ENCODE measurements at regions of chrX and their contacts with region 1.

Region 1: GRCh38 chrX:65706041-65706828 is 38.8 kb downstream of the MSN start:
- DNase-seq: peak; percentile 83
- H3K4me3 Mint-ChIP-seq: peak overlapping the region; percentile 52
- H3K27ac Mint-ChIP-seq: peak overlapping the region; percentile 96
- H3K4me1 Mint-ChIP-seq: peaks cover 68% of the 10 kb centered on the region
- H3K27me3 Mint-ChIP-seq: no peaks in the 10 kb centered on the region

Region 2: GRCh38 chrX:65273152-65273551 is 433.1 kb before region 1 on chrX:
- CTCF ChIA-PET with region 1: no interaction called
- intact Hi-C with region 1: no loop called
- DNase-seq: no peak
- H3K4me3 Mint-ChIP-seq: no peak overlapping the region
- H3K27ac Mint-ChIP-seq: no peak overlapping the region
- H3K4me1 Mint-ChIP-seq: no peaks in the 10 kb centered on the region
- H3K27me3 Mint-ChIP-seq: no peaks in the 10 kb centered on the region

Region 3: DNA sequence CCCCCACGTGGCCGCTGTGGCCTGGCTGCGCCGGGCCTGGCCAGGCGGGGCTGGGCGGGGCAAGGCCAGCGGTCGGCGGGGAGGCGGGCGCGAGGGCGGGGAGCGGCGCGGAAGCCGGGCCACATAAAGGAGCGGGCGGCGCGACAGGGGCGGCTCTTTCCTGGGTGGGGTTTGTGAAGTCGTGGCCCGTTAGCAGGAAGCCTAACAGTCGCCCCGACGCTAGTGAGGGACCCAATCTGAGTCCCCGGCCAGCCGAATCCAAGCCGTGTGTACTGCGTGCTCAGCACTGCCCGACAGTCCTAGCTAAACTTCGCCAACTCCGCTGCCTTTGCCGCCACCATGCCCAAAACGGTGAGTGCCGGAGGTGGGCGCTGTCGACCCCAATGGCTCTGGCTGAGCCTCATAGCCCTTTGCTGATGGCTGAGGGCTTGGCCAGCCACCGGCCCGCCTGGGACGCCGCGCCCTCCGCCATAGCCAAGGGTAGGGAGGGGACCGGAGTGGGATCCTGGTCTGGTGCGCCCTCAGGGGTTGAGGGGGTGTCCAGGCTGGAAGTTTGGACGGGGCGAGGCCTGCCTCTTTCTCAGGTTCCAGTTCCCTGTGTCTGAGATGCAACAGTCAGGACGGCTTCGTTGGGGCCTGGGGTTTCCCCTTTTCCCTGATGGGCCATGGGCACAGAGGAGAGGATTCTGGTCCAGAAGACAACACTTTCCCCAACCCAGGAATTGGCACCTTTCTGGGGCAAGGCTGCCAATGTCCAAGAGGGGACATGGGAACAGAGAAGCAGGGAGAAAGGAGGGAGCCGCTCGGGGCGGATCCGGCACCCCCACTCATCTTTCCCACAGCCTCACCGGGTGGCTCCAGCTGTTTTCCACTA is 38.5 kb before region 1 on chrX and contains the start of gene MSN:
- CTCF ChIA-PET with region 1: interaction called, 8 read pairs
- intact Hi-C with region 1: loop called (anchors 1 kb)
- DNase-seq: peak; percentile 78
- H3K4me3 Mint-ChIP-seq: peak within 1 kb of the TSS; percentile 94
- H3K27ac Mint-ChIP-seq: peak within 1 kb of the TSS; percentile 94
- H3K4me1 Mint-ChIP-seq: peaks cover 23% of the 10 kb centered on the region
- H3K27me3 Mint-ChIP-seq: no peaks in the 10 kb centered on the region
- total RNA-seq, gene MSN: 482 to 507 TPM

Region 4: GRCh38 chrX:65679071-65679540 is 27.1 kb before region 1 on chrX:
- CTCF ChIA-PET with region 1: interaction called, 3 read pairs
- intact Hi-C with region 1: loop called (anchors 1 kb)
- DNase-seq: no peak
- H3K4me3 Mint-ChIP-seq: no peak overlapping the region
- H3K27ac Mint-ChIP-seq: peak overlapping the region; percentile 91
- H3K4me1 Mint-ChIP-seq: peaks cover 86% of the 10 kb centered on the region
- H3K27me3 Mint-ChIP-seq: no peaks in the 10 kb centered on the region

Region 5: DNA sequence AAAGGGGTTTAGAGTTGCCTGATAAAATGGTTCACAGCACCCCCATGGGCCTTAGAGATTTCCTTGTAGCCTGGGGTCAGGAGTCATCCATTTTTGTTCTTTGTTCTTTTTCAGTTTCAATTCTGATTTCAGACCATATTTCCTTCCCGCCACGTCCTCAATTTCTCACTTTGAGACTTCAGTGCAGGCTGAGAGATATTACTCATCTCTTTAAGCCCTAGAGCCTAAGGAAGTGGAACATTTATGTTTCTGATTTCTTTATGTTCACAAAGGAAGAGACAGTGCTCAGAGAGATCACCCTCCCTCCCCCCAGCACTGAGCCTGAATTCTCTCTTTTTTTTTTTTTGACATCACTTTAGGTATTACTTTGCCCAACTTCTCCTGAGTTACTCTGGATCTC is 17.5 kb after region 1 on chrX:
- CTCF ChIA-PET with region 1: interaction called, 7 read pairs
- intact Hi-C with region 1: loop called (anchors 1 kb)
- DNase-seq: peak; percentile 60
- H3K4me3 Mint-ChIP-seq: peak overlapping the region; percentile 29
- H3K27ac Mint-ChIP-seq: peak overlapping the region; percentile 88
- H3K4me1 Mint-ChIP-seq: peaks cover 88% of the 10 kb centered on the region
- H3K27me3 Mint-ChIP-seq: no peaks in the 10 kb centered on the region

Region 6: DNA sequence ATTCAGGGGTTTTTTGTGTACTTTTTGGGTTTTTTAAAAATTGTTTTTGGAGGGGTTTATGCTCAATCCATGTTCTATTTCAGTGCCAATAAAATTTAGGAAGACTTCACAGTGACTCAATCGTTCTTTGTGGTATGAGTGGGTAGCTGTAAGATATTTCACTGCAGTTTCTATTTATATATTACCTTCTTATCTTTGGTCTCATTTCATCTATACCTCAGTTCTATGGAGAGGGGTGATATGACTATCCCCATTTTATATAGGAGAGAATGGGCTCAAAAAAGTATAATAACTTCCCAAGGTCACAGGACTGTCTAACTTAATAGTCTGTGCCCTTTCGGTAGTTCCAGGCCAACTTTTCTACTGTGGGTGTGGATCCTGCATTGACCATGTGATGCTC is 35.6 kb after region 1 on chrX:
- CTCF ChIA-PET with region 1: no interaction called
- intact Hi-C with region 1: loop called (anchors 2 kb)
- DNase-seq: no peak
- H3K4me3 Mint-ChIP-seq: no peak overlapping the region
- H3K27ac Mint-ChIP-seq: peak overlapping the region; percentile 41
- H3K4me1 Mint-ChIP-seq: peaks cover 53% of the 10 kb centered on the region
- H3K27me3 Mint-ChIP-seq: no peaks in the 10 kb centered on the region

Region 7: GRCh38 chrX:65932176-65933084 is 226.2 kb after region 1 on chrX:
- CTCF ChIA-PET with region 1: no interaction called
- intact Hi-C with region 1: loop called (anchors 1 kb)
- DNase-seq: peak; percentile 66
- H3K4me3 Mint-ChIP-seq: no peak overlapping the region
- H3K27ac Mint-ChIP-seq: peak overlapping the region; percentile 73
- H3K4me1 Mint-ChIP-seq: peaks cover 20% of the 10 kb centered on the region
- H3K27me3 Mint-ChIP-seq: no peaks in the 10 kb centered on the region

Region 8: GRCh38 chrX:66074920-66075879 is 369.0 kb after region 1 on chrX:
- CTCF ChIA-PET with region 1: no interaction called
- intact Hi-C with region 1: loop called (anchors 1 kb)
- DNase-seq: peak; percentile 73
- H3K4me3 Mint-ChIP-seq: peak overlapping the region; percentile 28
- H3K27ac Mint-ChIP-seq: peak overlapping the region; percentile 48
- H3K4me1 Mint-ChIP-seq: peaks cover 25% of the 10 kb centered on the region
- H3K27me3 Mint-ChIP-seq: no peaks in the 10 kb centered on the region

Measured in activated naive CD4-positive, alpha-beta T cell treated with anti-CD3 and anti-CD28 coated beads for 36 hours (primary cell).